ENCODE measurements at regions of chr3 and their contacts with region 1.

Region 1: GRCh38 chr3:46378426-46378942 is 7.7 kb downstream of the CCR5 start:
- DNase-seq: peak; percentile 79
- H3K4me3 Mint-ChIP-seq: no peak overlapping the region
- H3K27ac Mint-ChIP-seq: no peak overlapping the region
- H3K4me1 Mint-ChIP-seq: peaks cover 36% of the 10 kb centered on the region
- H3K27me3 Mint-ChIP-seq: peaks cover 13% of the 10 kb centered on the region

Region 2: GRCh38 chr3:46089237-46090011 is 289.1 kb before region 1 on chr3:
- CTCF ChIA-PET with region 1: interaction called, 18 read pairs
- POLR2A ChIA-PET with region 1: no interaction called
- intact Hi-C with region 1: no loop called
- DNase-seq: peak; percentile 65
- H3K4me3 Mint-ChIP-seq: no peak overlapping the region
- H3K27ac Mint-ChIP-seq: no peak overlapping the region
- H3K4me1 Mint-ChIP-seq: peaks cover 19% of the 10 kb centered on the region
- H3K27me3 Mint-ChIP-seq: peaks cover 33% of the 10 kb centered on the region

Region 3: DNA sequence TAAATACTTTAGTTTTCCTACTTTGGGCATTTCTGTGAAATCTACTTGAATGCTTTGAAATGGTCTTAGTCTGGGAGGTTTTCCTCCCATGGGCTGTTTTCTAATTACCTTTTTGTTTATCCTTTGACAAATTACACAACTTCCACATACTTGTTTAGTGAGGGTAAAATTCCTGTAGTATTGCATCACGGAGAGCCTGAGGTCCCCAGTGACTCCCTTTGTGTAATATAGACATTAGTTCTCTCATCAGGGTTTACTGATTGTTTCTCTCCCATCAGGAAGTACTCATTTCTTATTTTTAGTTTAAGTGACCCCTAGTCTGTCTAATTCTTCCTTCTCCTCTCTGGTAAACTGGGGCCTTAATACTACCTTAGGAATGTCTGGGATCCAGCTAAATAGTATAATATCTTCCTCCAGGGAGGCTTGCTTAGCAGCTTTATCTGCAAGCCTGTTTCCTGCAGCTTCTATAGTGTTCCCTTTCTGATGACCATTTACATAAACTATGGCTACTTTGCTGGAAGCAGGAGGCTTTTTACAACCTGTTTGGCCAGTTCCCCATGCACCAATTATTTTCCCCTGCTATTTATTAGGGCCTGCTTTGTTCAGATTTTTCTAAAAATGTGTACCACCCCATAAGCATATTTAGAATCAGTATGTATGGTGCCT is 264.0 kb before region 1 on chr3:
- CTCF ChIA-PET with region 1: no interaction called
- POLR2A ChIA-PET with region 1: no interaction called
- intact Hi-C with region 1: no loop called
- DNase-seq: no peak
- H3K4me3 Mint-ChIP-seq: no peak overlapping the region
- H3K27ac Mint-ChIP-seq: no peak overlapping the region
- H3K4me1 Mint-ChIP-seq: peaks cover 11% of the 10 kb centered on the region
- H3K27me3 Mint-ChIP-seq: peaks cover 1% of the 10 kb centered on the region

Region 4: DNA sequence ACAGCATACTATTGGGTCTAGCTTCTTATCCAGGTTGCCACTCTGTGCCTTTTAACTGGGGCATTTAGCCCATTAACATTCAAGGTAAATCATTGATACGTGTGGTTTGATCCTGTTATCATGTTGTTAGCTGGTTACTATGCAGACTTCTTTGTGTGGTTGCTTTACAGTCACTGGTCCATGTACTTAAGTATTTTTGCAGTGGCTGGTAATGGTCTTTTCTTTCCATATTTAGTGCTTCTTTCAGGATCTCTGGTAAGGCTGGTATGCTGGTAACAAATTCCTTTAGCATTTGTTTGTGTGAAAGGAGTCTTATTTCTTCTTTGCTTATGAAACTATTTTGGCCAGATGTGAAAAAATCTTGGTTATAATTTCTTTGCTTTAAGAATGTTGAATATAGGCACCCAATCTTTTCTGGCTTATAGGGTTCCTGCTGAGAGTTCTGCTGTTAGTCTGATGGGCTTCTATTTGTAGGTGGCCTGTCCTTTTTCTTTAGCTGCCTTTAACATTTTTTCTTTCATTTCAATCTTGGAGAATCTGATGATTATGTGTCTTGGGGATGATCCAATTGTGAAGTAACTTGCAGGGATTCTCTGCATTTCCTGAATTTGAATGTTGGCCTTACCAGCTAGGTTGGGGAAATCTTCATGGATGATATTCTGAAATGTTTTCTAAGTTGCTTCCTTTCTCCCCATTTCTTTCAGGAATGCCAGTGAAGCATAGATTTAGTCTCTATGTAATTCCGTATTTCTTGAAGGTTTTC is 209.7 kb before region 1 on chr3:
- CTCF ChIA-PET with region 1: no interaction called
- POLR2A ChIA-PET with region 1: no interaction called
- intact Hi-C with region 1: no loop called
- DNase-seq: no peak
- H3K4me3 Mint-ChIP-seq: no peak overlapping the region
- H3K27ac Mint-ChIP-seq: no peak overlapping the region
- H3K4me1 Mint-ChIP-seq: no peaks in the 10 kb centered on the region
- H3K27me3 Mint-ChIP-seq: no peaks in the 10 kb centered on the region

Region 5: DNA sequence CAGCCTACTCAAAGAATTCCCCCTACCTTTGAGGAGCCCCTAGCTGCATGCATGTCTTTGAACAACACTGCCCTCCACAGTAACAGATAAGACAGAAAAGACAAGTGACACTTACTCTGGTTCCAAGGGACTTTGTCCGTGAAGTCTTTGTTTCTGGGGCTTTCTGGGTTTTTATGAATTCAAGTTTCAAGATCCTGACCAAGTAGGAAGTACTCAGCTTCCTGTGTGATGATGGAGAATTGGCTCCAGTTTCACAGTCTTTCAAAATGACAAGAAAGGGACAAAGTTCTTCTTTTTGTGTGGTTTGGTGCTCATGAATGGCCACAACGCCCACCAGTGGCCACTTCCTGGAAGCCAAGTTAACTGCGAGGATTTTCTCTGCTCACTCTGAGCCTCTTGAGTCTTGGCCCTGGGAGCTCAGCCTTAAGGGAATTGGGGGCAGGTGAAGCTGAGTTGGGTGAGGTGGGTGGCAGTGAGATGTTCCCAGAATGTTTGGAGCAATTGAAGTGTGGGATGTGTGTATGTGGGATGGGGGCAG is 170.2 kb before region 1 on chr3 and contains the start of gene CCR1:
- CTCF ChIA-PET with region 1: interaction called, 11 read pairs
- POLR2A ChIA-PET with region 1: no interaction called
- intact Hi-C with region 1: no loop called
- DNase-seq: peak; percentile 81
- H3K4me3 Mint-ChIP-seq: no peak within 1 kb of the TSS
- H3K27ac Mint-ChIP-seq: peak within 1 kb of the TSS; percentile 64
- H3K4me1 Mint-ChIP-seq: peaks cover 17% of the 10 kb centered on the region
- H3K27me3 Mint-ChIP-seq: peaks cover 1% of the 10 kb centered on the region
- total RNA-seq, gene CCR1: 0.80 to 1.3 TPM

Region 6: GRCh38 chr3:46214751-46215352 is 163.6 kb before region 1 on chr3:
- CTCF ChIA-PET with region 1: interaction called, 11 read pairs
- POLR2A ChIA-PET with region 1: no interaction called
- intact Hi-C with region 1: no loop called
- DNase-seq: peak; percentile 41
- H3K4me3 Mint-ChIP-seq: no peak overlapping the region
- H3K27ac Mint-ChIP-seq: no peak overlapping the region
- H3K4me1 Mint-ChIP-seq: no peaks in the 10 kb centered on the region
- H3K27me3 Mint-ChIP-seq: no peaks in the 10 kb centered on the region

Region 7: GRCh38 chr3:46312991-46313390 is 65.5 kb before region 1 on chr3:
- CTCF ChIA-PET with region 1: no interaction called
- POLR2A ChIA-PET with region 1: no interaction called
- intact Hi-C with region 1: no loop called
- DNase-seq: no peak
- H3K4me3 Mint-ChIP-seq: no peak overlapping the region
- H3K27ac Mint-ChIP-seq: no peak overlapping the region
- H3K4me1 Mint-ChIP-seq: no peaks in the 10 kb centered on the region
- H3K27me3 Mint-ChIP-seq: peaks cover 12% of the 10 kb centered on the region